ENCODE measurements at regions of chr7 and their contacts with region 1.

Region 1: DNA sequence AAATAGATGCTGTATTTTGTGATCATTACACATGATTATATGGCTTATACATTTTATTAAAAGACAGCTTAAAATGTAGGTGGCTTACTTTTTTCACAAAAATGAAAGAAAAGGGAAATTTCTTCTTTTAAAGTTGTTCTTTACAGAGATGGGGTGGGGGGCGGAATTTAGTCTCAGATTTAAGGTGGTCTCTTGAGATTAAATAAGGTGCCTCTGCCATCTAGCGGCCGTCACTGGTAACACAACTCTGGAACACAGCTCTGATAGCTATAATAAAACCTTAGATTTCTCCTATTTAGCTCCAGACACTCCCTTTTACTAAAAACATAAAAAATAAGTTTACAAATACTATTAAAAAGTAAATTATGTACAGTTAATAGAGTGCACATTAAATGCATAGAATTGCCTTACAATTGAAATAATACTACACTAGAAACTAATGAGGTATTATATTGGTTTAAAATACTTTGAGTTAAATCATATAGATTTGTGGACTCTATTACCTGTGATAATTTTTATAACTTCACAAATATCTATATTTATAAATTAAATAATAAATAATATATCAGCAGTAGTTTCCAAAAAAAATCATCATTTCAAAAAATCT is 210.9 kb downstream of the DGKB start:
- DNase-seq: peak; percentile 42
- H3K4me3 Mint-ChIP-seq: no peak overlapping the region
- H3K27ac Mint-ChIP-seq: no peak overlapping the region
- H3K4me1 Mint-ChIP-seq: no peaks in the 10 kb centered on the region
- H3K27me3 Mint-ChIP-seq: peaks cover 33% of the 10 kb centered on the region
- CTCF ChIP-seq: peak; percentile 88

Region 2: GRCh38 chr7:13742811-13743210 is 948.9 kb before region 1 on chr7:
- CTCF ChIA-PET with region 1: interaction called, 11 read pairs
- POLR2A ChIA-PET with region 1: no interaction called
- intact Hi-C with region 1: no loop called
- DNase-seq: peak; percentile 66
- H3K4me3 Mint-ChIP-seq: no peak overlapping the region
- H3K27ac Mint-ChIP-seq: peak overlapping the region; percentile 4
- H3K4me1 Mint-ChIP-seq: no peaks in the 10 kb centered on the region
- H3K27me3 Mint-ChIP-seq: no peaks in the 10 kb centered on the region
- CTCF ChIP-seq: no peak

Region 3: DNA sequence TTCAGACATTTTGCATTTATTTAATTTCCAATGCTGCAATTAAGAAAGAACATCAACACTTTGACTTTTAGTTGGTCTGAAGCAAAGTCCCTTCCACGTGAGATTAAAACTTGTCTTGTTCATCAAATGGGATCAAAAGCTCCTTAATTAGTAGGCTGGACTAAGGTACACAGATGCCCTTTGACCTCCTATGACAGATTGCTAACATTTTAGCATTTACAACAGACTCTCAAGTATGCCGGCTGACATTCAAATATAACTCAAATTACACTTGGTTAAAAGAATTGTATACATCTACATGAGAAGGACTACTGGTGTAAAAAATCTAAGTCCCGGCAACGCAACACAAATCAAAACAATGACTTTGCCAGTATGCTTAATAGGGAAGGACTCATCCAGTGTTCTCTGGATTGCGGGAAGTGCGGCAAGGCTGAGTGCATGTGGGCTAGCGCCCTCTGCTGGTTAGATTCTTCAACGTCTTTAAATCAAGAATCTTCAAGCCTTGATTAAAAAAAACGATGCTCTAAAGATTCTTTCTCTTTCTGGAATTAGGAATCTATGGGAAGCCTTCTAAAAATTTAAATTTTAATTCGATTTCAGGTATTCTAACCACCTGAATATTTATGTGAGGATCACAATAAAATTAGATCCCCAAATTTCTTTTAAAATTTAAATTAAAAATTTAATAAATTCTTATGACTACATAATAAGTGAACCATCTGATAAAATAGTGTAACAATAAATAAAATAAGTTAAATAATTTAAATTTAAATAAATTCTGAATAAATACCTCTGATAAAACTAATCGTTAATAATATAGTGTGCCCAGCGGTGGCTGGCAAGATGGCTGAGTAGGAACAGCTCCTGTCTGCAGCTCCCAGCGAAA is 233.9 kb before region 1 on chr7:
- CTCF ChIA-PET with region 1: interaction called, 10 read pairs
- POLR2A ChIA-PET with region 1: interaction called, 3 read pairs
- intact Hi-C with region 1: no loop called
- DNase-seq: peak; percentile 81
- H3K4me3 Mint-ChIP-seq: no peak overlapping the region
- H3K27ac Mint-ChIP-seq: no peak overlapping the region
- H3K4me1 Mint-ChIP-seq: no peaks in the 10 kb centered on the region
- H3K27me3 Mint-ChIP-seq: no peaks in the 10 kb centered on the region
- CTCF ChIP-seq: peak; percentile 76

Region 4: GRCh38 chr7:14483663-14484062 is 208.0 kb before region 1 on chr7:
- CTCF ChIA-PET with region 1: interaction called, 13 read pairs
- POLR2A ChIA-PET with region 1: interaction called, 3 read pairs
- intact Hi-C with region 1: loop called (anchors 1 kb)
- DNase-seq: no peak
- H3K4me3 Mint-ChIP-seq: no peak overlapping the region
- H3K27ac Mint-ChIP-seq: no peak overlapping the region
- H3K4me1 Mint-ChIP-seq: no peaks in the 10 kb centered on the region
- H3K27me3 Mint-ChIP-seq: peaks cover 32% of the 10 kb centered on the region
- CTCF ChIP-seq: peak; percentile 21

Region 5: DNA sequence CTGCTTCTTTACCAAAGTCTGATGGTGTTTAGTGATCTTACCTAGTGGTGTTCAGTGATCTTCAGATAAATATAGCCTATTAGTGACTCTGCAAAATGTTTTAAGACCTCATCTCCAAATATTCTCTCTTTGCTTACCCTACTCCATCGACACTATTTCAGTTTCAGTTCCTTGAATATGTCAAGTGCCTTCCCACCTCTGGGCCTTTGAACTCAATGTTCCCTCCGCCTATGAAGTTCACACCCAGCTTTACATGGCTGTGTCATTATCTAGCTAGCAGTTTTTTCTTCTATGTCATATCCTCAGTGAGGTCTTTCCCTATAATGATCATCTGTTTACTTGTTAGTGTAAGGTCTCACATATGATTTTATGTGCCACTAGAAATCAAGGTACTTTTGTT is 111.7 kb before region 1 on chr7:
- CTCF ChIA-PET with region 1: no interaction called
- POLR2A ChIA-PET with region 1: no interaction called
- intact Hi-C with region 1: no loop called
- DNase-seq: no peak
- H3K4me3 Mint-ChIP-seq: no peak overlapping the region
- H3K27ac Mint-ChIP-seq: no peak overlapping the region
- H3K4me1 Mint-ChIP-seq: no peaks in the 10 kb centered on the region
- H3K27me3 Mint-ChIP-seq: peaks cover 25% of the 10 kb centered on the region
- CTCF ChIP-seq: no peak

Region 6: DNA sequence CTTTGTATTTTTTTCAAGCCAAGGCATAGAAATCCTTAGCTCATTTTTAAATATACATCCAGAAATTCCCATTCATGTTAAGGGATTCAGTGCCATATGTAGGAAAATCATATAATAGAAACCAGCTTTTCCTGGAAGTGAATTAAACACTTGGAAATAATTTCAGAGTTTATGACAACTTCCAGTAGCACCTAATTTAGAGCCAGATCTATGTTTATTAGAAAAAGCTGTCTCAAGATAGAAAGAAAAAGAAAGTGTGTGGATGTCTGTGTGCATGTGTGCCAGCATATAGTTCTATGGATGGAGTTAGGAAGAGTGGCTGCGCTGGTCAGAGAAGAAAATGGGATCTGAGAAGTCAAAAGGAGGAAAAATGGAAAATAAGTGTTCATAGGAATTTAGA is 14.8 kb before region 1 on chr7:
- CTCF ChIA-PET with region 1: interaction called, 21 read pairs
- POLR2A ChIA-PET with region 1: interaction called, 3 read pairs
- intact Hi-C with region 1: no loop called
- DNase-seq: no peak
- H3K4me3 Mint-ChIP-seq: no peak overlapping the region
- H3K27ac Mint-ChIP-seq: no peak overlapping the region
- H3K4me1 Mint-ChIP-seq: no peaks in the 10 kb centered on the region
- H3K27me3 Mint-ChIP-seq: peaks cover 37% of the 10 kb centered on the region
- CTCF ChIP-seq: no peak

Region 7: GRCh38 chr7:15407910-15408309 is 716.2 kb after region 1 on chr7:
- CTCF ChIA-PET with region 1: no interaction called
- POLR2A ChIA-PET with region 1: no interaction called
- intact Hi-C with region 1: no loop called
- DNase-seq: no peak
- H3K4me3 Mint-ChIP-seq: no peak overlapping the region
- H3K27ac Mint-ChIP-seq: no peak overlapping the region
- H3K4me1 Mint-ChIP-seq: no peaks in the 10 kb centered on the region
- H3K27me3 Mint-ChIP-seq: peaks cover 21% of the 10 kb centered on the region
- CTCF ChIP-seq: no peak